ENCODE measurements at regions of chr2 and their contacts with region 1.

Region 1: DNA sequence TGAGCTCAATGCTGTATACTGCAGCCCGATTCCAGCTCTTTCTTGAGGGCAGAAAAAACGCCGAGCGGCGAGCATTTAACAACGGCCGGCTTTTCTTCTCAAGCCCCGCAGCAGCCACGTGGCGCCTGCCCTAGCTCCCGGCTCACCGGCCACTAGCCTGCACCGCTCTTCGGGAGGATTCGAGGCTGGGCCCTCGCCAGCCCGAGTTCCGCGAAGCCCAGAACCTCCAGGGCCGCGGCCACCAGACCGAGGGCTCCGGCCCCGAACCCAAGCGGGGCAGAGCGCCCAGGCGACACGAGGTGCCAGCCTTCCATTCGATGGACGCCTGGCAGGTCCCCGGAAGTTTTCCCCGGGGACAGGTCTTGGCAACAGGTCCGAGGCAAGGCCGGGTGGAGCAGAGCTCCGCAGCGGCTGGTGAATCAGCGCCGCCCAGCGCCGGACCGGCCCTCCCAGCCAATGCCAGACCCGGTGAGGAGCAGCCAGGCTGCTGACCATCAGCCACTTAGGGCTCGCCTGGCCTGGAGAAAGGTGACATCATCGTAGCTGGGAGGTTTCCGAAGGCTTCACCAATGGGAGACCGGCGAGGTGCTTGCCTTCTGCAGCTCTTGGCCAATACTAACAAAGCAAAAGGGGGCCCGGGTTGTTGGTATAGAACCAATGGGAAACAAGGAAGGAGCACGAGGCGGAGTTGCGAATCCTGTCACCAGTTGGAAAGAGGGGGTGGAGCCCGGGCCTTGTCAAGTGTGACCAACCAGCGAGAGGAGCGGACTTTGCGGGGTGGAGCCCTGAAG is 544 bp upstream of the MXD1 start:
- DNase-seq: no peak
- ATAC-seq: peak; percentile 91
- H3K4me3 Mint-ChIP-seq: peak overlapping the region; percentile 87
- H3K27ac Mint-ChIP-seq: peak overlapping the region; percentile 91
- H3K4me1 Mint-ChIP-seq: peaks cover 41% of the 10 kb centered on the region
- H3K27me3 Mint-ChIP-seq: no peaks in the 10 kb centered on the region
- CTCF ChIP-seq: no peak

Region 2: GRCh38 chr2:69724540-69725159 is 189.7 kb before region 1 on chr2:
- CTCF ChIA-PET with region 1: interaction called, 9 read pairs
- POLR2A ChIA-PET with region 1: interaction called, 3 read pairs
- intact Hi-C with region 1: loop called (anchors 5 kb)
- DNase-seq: peak; percentile 74
- ATAC-seq: peak; percentile 75
- H3K4me3 Mint-ChIP-seq: peak overlapping the region; percentile 52
- H3K27ac Mint-ChIP-seq: no peak overlapping the region
- H3K4me1 Mint-ChIP-seq: peaks cover 6% of the 10 kb centered on the region
- H3K27me3 Mint-ChIP-seq: peaks cover 6% of the 10 kb centered on the region
- CTCF ChIP-seq: peak; percentile 84

Region 3: GRCh38 chr2:70086838-70087701 is 172.7 kb after region 1 on chr2 and contains the start of gene PCBP1:
- CTCF ChIA-PET with region 1: interaction called, 17 read pairs
- POLR2A ChIA-PET with region 1: interaction called, 192 read pairs
- intact Hi-C with region 1: loop called (anchors 1 kb)
- DNase-seq: peak; percentile 96
- ATAC-seq: peak; percentile 54
- H3K4me3 Mint-ChIP-seq: peak within 1 kb of the TSS; percentile 96
- H3K27ac Mint-ChIP-seq: peak within 1 kb of the TSS; percentile 100
- H3K4me1 Mint-ChIP-seq: peaks cover 70% of the 10 kb centered on the region
- H3K27me3 Mint-ChIP-seq: no peaks in the 10 kb centered on the region
- CTCF ChIP-seq: no peak
- total RNA-seq, gene PCBP1: 370 and 379 TPM in 2 replicates

Region 4: GRCh38 chr2:70132244-70133126 is 218.1 kb after region 1 on chr2:
- CTCF ChIA-PET with region 1: interaction called, 3 read pairs
- POLR2A ChIA-PET with region 1: interaction called, 33 read pairs
- intact Hi-C with region 1: no loop called
- DNase-seq: no peak
- ATAC-seq: peak; percentile 72
- H3K4me3 Mint-ChIP-seq: peak overlapping the region; percentile 92
- H3K27ac Mint-ChIP-seq: peak overlapping the region; percentile 99
- H3K4me1 Mint-ChIP-seq: peaks cover 72% of the 10 kb centered on the region
- H3K27me3 Mint-ChIP-seq: no peaks in the 10 kb centered on the region
- CTCF ChIP-seq: no peak

Region 5: DNA sequence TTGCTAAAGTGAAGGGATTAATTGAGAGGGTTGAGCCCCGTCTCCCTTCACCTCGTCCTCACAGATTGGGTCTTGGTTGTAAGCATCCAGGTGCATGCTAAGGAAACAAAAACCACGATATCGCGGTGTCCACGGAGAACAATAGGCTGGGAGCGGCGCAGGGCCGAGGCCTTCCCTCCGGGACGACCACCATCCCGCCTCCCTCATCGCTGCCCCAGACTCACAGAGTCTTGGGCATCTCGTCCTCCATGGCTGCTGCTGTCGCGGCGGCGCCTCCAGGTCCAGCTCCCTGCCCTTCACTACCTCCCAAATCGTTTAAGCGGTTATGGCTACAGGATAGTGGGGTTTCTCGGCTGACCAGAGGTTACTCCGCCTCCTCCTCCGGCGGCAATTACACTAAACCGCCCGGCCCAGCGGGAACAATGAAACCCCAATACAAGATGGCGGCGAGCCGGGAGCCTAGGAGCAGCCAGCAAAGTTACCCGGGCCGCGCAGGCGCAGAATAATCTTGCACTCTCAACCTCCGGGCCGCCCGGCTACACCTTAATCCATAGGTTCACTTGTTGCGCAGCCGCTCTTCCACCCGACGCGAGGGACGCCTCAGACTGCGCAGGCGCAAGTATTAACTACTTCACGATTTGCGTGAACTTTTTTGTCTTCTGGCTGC is 333.9 kb after region 1 on chr2 and contains the start of gene TIA1:
- CTCF ChIA-PET with region 1: no interaction called
- POLR2A ChIA-PET with region 1: interaction called, 6 read pairs
- intact Hi-C with region 1: loop called (anchors 1 kb)
- DNase-seq: peak; percentile 93
- ATAC-seq: peak; percentile 96
- H3K4me3 Mint-ChIP-seq: peak within 1 kb of the TSS; percentile 99
- H3K27ac Mint-ChIP-seq: peak within 1 kb of the TSS; percentile 99
- H3K4me1 Mint-ChIP-seq: peaks cover 44% of the 10 kb centered on the region
- H3K27me3 Mint-ChIP-seq: peaks cover 4% of the 10 kb centered on the region
- CTCF ChIP-seq: no peak
- total RNA-seq, gene TIA1: 129 and 149 TPM in 2 replicates

Region 6: GRCh38 chr2:70647873-70648481 is 733.6 kb after region 1 on chr2:
- CTCF ChIA-PET with region 1: no interaction called
- POLR2A ChIA-PET with region 1: no interaction called
- intact Hi-C with region 1: loop called (anchors 10 kb)
- DNase-seq: peak; percentile 52
- ATAC-seq: peak; percentile 77
- H3K4me3 Mint-ChIP-seq: no peak overlapping the region
- H3K27ac Mint-ChIP-seq: no peak overlapping the region
- H3K4me1 Mint-ChIP-seq: no peaks in the 10 kb centered on the region
- H3K27me3 Mint-ChIP-seq: peaks cover 26% of the 10 kb centered on the region
- CTCF ChIP-seq: peak; percentile 84